ENCODE measurements at regions of chr1 and their contacts with region 1.

Region 1: GRCh38 chr1:186315570-186315969 is 59.5 kb downstream of the TPR start:
- DNase-seq: no peak
- H3K4me3 ChIP-seq: no peak overlapping the region
- H3K27ac ChIP-seq: no peak overlapping the region
- H3K4me1 ChIP-seq: no peaks in the 10 kb centered on the region
- H3K27me3 ChIP-seq: no peaks in the 10 kb centered on the region
- CTCF ChIP-seq: no peak
- EP300 ChIP-seq: no peak
- RAD21 ChIP-seq: no peak

Region 2: DNA sequence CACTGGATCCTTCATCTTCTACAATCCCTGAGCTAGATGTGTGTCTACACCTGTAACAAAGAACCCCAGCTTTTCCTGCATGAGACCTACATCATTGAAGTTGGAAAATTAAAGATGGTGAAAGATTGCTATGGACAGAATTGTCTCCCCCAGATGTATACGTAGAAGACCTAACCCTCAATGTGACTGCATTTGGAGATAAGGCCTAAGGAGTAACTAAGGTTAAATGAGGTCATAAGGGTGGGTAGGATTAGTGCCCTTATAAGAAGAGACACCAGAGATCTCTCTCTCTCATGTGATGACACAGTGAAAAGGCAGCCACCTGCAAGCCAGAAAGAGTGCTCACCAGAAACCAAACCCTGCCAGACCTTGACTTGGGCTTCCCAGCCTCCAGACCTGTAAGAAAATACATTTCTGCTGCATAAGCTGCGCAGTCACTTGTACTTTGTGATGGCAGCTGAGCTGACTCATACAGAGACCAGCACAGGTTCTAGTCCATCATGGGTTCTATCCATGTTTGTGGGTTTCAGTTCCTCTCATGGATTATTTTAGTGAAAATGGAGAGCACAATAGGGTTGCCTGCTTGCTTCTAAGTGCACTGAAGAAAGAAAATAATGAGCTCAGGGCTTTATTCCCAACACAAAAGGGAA is 121.3 kb before region 1 on chr1:
- CTCF ChIA-PET with region 1: no interaction called
- POLR2A ChIA-PET with region 1: no interaction called
- DNase-seq: no peak
- H3K4me3 ChIP-seq: no peak overlapping the region
- H3K27ac ChIP-seq: no peak overlapping the region
- H3K4me1 ChIP-seq: peaks cover 4 to 14% of the 10 kb centered on the region in 2 experiments; a peak in 3 of 4 replicates
- H3K27me3 ChIP-seq: no peaks in the 10 kb centered on the region
- CTCF ChIP-seq: no peak
- EP300 ChIP-seq: no peak
- RAD21 ChIP-seq: no peak

Region 3: GRCh38 chr1:186304982-186305949 is 10.3 kb before region 1 on chr1:
- CTCF ChIA-PET with region 1: interaction called, 11 read pairs
- POLR2A ChIA-PET with region 1: no interaction called
- DNase-seq: peak; percentile 47
- H3K4me3 ChIP-seq: no peak overlapping the region
- H3K27ac ChIP-seq: no peak overlapping the region
- H3K4me1 ChIP-seq: no peaks in the 10 kb centered on the region
- H3K27me3 ChIP-seq: no peaks in the 10 kb centered on the region
- CTCF ChIP-seq: peak; percentile 72
- EP300 ChIP-seq: no peak
- RAD21 ChIP-seq: peak; percentile 40

Region 4: GRCh38 chr1:186386725-186387383 is 71.3 kb after region 1 on chr1:
- CTCF ChIA-PET with region 1: no interaction called
- POLR2A ChIA-PET with region 1: no interaction called
- DNase-seq: no peak
- H3K4me3 ChIP-seq: no peak overlapping the region
- H3K27ac ChIP-seq: no peak overlapping the region
- H3K4me1 ChIP-seq: no peaks in the 10 kb centered on the region
- H3K27me3 ChIP-seq: no peaks in the 10 kb centered on the region
- CTCF ChIP-seq: no peak
- EP300 ChIP-seq: no peak
- RAD21 ChIP-seq: no peak

Measured in SK-N-SH (cell line).